Pancreas (tissue), 10 donors: ENCODE measurements at regions of chr6 and their contacts with region 1.

Region 1: DNA sequence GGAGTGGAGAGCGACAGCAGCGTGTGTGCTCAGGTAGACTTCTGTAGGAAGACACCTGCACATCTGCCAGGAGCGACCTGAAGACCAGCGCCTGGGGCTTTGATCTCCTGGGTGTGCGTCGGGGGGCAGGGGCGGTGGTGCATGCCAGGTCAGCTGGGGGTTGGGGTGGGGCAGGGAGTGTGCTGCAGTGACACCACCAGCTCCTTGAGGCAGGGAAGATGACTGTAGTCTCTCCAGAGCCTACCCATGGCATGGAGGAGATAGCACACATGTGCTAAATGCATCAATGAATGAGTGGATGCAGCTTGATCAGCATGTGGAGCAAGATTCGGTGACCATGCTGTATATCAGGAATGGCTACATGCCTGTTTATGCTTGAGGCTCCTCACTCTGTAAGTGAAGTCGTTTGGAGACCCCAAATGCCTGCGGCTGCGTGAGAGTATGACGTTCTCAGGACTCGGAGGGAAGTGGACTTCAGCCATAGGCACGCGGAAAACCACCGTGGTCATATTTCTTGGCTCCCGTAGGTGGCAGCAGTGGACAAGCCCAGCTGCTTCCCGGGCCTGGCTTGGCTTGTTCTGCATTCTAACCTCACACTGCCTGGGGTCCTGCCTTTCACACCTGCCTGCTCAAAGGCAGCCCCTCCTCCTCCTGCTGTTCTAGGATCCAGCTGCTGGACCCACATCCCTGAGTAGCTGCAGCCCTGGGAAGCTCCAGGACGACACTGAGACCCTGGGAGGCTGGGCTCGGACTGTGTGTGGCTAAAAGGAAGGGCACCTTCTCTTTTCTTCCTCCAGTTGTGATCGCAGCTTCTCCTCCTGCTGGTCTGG is 39.4 kb upstream of the KCNK16 start:
- DNase-seq: peak; percentile 41 to 85 (median 71)
- ATAC-seq: peak; percentile 76 to 95 (median 93)
- H3K4me3 ChIP-seq: no peak overlapping the region
- H3K27ac ChIP-seq: no peak overlapping the region
- H3K4me1 ChIP-seq: no peaks in the 10 kb centered on the region
- H3K27me3 ChIP-seq: no peaks in the 10 kb centered on the region
- CTCF ChIP-seq: peak; percentile 59 to 83 (median 70)

Region 2: DNA sequence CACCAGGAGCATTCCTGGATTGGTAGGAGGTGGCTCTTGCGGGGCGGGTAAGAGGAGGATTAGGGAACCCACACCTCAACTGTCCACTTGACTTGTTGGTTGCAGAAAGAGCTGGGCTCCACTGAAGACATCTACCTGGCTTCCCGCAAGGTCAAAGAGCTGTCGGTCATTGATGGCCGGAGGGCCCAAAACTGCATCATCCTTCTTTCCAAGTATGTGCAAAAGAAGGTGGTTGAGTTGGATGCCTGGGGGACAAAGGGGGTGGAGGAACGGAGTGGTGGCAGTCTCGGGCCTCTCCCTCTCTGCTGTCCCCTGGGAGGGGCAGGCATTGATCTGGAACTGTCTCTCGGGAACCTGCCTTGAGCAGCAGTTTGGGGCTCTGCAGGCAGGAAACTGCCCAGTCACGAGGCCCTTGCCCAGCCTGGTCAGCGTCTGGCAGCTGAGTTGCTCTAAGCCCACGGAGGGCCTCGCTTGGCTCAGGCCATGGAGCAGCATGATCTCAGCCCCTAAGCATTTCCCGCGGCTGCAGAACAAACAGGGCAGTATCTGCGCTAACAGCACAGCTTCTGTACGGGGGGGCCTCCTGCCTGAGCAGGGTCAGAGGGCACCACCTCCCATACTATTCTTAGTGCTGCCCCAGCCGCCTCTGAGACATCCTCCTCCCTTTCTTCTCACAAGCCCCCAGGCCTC is 525.7 kb after region 1 on chr6:
- intact Hi-C with region 1: loop called in 2 of 3 experiments (anchors 5 to 10 kb)
- DNase-seq: peak in 5 of 6 donors; percentile 50 to 84 (median 63)
- ATAC-seq: peak; percentile 69 to 84 (median 79)
- H3K4me3 ChIP-seq: no peak overlapping the region
- H3K27ac ChIP-seq: peak overlapping the region in 3 of 4 donors; percentile 6 to 53 (median 42)
- H3K4me1 ChIP-seq: no peaks in the 10 kb centered on the region
- H3K27me3 ChIP-seq: no peaks in the 10 kb centered on the region
- CTCF ChIP-seq: no peak